ENCODE measurements at regions of chrX and their contacts with region 1.

Region 1: DNA sequence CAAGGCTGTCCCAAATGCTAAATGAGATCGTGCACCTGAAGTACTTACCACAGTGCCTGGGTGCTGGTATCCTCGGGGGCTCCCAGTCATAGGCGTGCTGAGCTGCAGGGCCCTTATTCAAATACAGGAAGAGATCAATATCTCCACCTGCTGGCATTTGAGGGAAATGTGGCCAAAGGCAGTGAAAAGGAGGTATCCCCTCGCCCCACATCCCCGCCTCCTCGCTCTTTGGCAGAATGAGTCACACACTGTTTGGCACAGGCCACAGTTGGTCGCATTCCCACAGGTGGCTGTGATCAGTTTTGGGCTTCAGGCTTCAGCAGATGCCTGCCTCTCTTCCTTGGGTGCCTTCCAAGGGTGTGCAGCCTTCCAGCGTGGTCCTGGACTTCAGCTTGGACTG is 28.4 kb downstream of the ZNF185 start:
- DNase-seq: peak; percentile 64
- ATAC-seq: peak; percentile 91
- H3K4me3 ChIP-seq: no peak overlapping the region
- H3K27ac ChIP-seq: no peak overlapping the region
- H3K4me1 ChIP-seq: peaks cover 8 to 11% of the 10 kb centered on the region in 2 experiments
- H3K27me3 ChIP-seq: no peaks in the 10 kb centered on the region
- CTCF ChIP-seq: peak; percentile 44 to 54 (median 50); a peak in 4 of 6 replicates
- POLR2A ChIP-seq: no peak
- RAD21 ChIP-seq: peak; percentile 67

Region 2: GRCh38 chrX:152904151-152905080 is 21.9 kb before region 1 on chrX:
- CTCF ChIA-PET with region 1: interaction called, 3 read pairs
- POLR2A ChIA-PET with region 1: no interaction called
- RAD21 ChIA-PET with region 1: no interaction called
- intact Hi-C with region 1: loop called (anchors 1 kb)
- DNase-seq: no peak
- ATAC-seq: peak; percentile 87
- H3K4me3 ChIP-seq: no peak overlapping the region
- H3K27ac ChIP-seq: no peak overlapping the region
- H3K4me1 ChIP-seq: peaks cover 0 to 24% of the 10 kb centered on the region in 2 experiments; a peak in 2 of 4 replicates
- H3K27me3 ChIP-seq: no peaks in the 10 kb centered on the region
- CTCF ChIP-seq: peak in 2 of 3 experiments; percentile 65 to 78; a peak in 4 of 6 replicates
- POLR2A ChIP-seq: no peak
- RAD21 ChIP-seq: no peak

Measured in HCT116 (cell line).